ENCODE measurements at regions of chr1 and their contacts with region 1.

Region 1: DNA sequence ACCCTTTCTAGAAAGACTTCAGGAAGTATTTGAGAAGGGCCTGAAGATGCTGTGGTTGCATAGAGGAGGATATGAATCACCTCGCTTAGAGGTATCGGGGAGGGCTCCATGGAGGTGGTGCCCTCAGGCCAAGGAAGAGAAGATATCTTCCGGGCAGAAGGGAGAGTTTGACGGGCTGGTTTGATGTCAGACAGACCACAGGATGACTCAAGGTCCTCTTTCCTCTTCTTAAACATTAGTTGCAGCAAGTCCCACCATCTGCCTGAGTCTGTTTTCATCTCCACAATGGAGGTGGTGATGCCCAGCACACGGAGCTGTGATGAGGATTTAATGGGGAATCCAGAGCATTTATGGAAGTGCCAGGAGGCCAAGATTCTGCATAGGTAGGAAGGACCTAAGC is 25.1 kb upstream of the RUNX3 start:
- DNase-seq: peak; percentile 94
- ATAC-seq: peak; percentile 77
- H3K4me3 Mint-ChIP-seq: peak overlapping the region; percentile 77
- H3K27ac Mint-ChIP-seq: peak overlapping the region; percentile 92
- H3K4me1 Mint-ChIP-seq: peaks cover 93% of the 10 kb centered on the region
- H3K27me3 Mint-ChIP-seq: no peaks in the 10 kb centered on the region

Region 2: GRCh38 chr1:24744911-24745710 is 210.1 kb before region 1 on chr1 and contains the start of gene CLIC4:
- CTCF ChIA-PET with region 1: no interaction called
- DNase-seq: peak; percentile 99
- ATAC-seq: peak; percentile 94
- H3K4me3 Mint-ChIP-seq: peak within 1 kb of the TSS; percentile 82
- H3K27ac Mint-ChIP-seq: peak within 1 kb of the TSS; percentile 69
- H3K4me1 Mint-ChIP-seq: peaks cover 44% of the 10 kb centered on the region
- H3K27me3 Mint-ChIP-seq: peaks cover 21% of the 10 kb centered on the region
- total RNA-seq, gene CLIC4: 16.9 to 23.0 TPM

Region 3: GRCh38 chr1:24923485-24924113 is 31.6 kb before region 1 on chr1:
- CTCF ChIA-PET with region 1: interaction called, 45 read pairs
- DNase-seq: peak; percentile 77
- ATAC-seq: peak; percentile 8
- H3K4me3 Mint-ChIP-seq: peak overlapping the region; percentile 67
- H3K27ac Mint-ChIP-seq: peak overlapping the region; percentile 87
- H3K4me1 Mint-ChIP-seq: peaks cover 90% of the 10 kb centered on the region
- H3K27me3 Mint-ChIP-seq: no peaks in the 10 kb centered on the region